T-cell (primary cell): ENCODE measurements at regions of chr13 and their contacts with region 1.

Region 1: GRCh38 chr13:32323912-32324311 is 8.6 kb downstream of the BRCA2 start:
- DNase-seq: no peak
- ATAC-seq: no peak
- H3K4me3 ChIP-seq: no peak overlapping the region
- H3K4me3 Mint-ChIP-seq: no peak overlapping the region
- H3K27ac ChIP-seq: no peak overlapping the region
- H3K27ac Mint-ChIP-seq: no peak overlapping the region
- H3K4me1 ChIP-seq: no peaks in the 10 kb centered on the region
- H3K4me1 Mint-ChIP-seq: no peaks in the 10 kb centered on the region
- H3K27me3 ChIP-seq: no peaks in the 10 kb centered on the region
- H3K27me3 Mint-ChIP-seq: no peaks in the 10 kb centered on the region

Region 2: DNA sequence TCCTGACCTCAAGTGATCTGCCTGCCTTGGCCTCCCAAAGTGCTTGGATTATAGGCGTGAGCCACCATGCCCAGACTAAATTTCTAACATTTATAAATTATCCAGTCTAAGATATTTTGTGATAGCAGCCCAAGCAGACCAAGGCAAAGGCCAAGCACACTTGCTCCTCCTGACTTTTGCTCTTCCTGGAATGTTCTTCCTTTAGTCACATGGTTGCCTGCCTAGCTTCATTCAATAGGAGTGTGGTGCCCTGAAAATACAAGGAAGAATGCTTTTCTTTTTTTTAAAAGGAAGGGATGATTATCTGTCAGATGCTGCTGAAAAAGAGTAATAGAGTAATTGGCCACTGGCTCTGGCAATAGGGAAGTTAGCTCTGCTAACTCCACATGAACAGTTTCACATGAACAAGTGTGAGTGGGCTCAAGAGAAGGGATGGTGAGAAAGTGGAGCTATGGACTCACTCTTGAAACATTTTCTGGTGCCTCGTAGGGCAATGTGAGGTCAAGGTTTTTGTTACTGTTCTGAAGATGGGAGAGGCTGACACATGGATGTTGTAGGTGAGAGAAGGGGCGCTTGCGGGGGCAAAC is 1659.1 kb before region 1 on chr13:
- CTCF ChIA-PET with region 1: no interaction called
- POLR2A ChIA-PET with region 1: interaction called in 1 of 2 experiments, 12 read pairs
- DNase-seq: no peak
- ATAC-seq: no peak
- H3K4me3 ChIP-seq: no peak overlapping the region
- H3K4me3 Mint-ChIP-seq: no peak overlapping the region
- H3K27ac ChIP-seq: no peak overlapping the region
- H3K27ac Mint-ChIP-seq: no peak overlapping the region
- H3K4me1 ChIP-seq: peaks cover 8 to 10% of the 10 kb centered on the region in 2 experiments
- H3K4me1 Mint-ChIP-seq: peaks cover 0 to 9% (median 5%) of the 10 kb centered on the region in 3 donors
- H3K27me3 ChIP-seq: no peaks in the 10 kb centered on the region
- H3K27me3 Mint-ChIP-seq: no peaks in the 10 kb centered on the region

Region 3: DNA sequence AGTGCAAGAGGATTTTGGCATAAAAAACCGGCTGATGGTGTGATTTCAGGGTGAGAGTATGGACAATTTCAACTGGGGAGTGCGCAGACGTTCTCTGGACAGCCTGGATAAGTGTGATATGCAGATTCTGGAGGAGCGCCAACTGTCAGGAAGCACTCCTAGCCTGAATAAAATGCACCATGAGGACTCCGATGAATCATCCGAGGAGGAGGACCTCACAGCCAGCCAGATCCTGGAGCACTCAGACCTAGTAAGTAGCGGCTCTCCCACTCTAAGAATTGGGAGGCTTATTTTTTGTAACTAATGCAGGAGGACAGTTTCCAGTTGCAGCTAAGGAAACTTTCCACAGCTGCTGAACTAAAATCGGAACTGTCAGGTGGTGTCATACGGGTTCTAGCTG is 62.3 kb before region 1 on chr13:
- CTCF ChIA-PET with region 1: no interaction called
- POLR2A ChIA-PET with region 1: no interaction called
- DNase-seq: no peak
- ATAC-seq: no peak
- H3K4me3 ChIP-seq: no peak overlapping the region
- H3K4me3 Mint-ChIP-seq: no peak overlapping the region
- H3K27ac ChIP-seq: no peak overlapping the region
- H3K27ac Mint-ChIP-seq: no peak overlapping the region
- H3K4me1 ChIP-seq: no peaks in the 10 kb centered on the region
- H3K4me1 Mint-ChIP-seq: no peaks in the 10 kb centered on the region
- H3K27me3 ChIP-seq: no peaks in the 10 kb centered on the region
- H3K27me3 Mint-ChIP-seq: no peaks in the 10 kb centered on the region